Naive thymus-derived CD4-positive, alpha-beta T cell (primary cell): ENCODE measurements at regions of chr22 and their contacts with region 1.

Region 1: GRCh38 chr22:31661851-31662656 is at the start of gene PISD:
- DNase-seq: peak; percentile 93 to 98 (median 97)
- ATAC-seq: peak; percentile 99
- H3K4me3 ChIP-seq: peak within 1 kb of the TSS; percentile 93
- H3K4me3 Mint-ChIP-seq: peak within 1 kb of the TSS; percentile 90 to 100 (median 98)
- H3K27ac ChIP-seq: peak within 1 kb of the TSS; percentile 78
- H3K27ac Mint-ChIP-seq: peak within 1 kb of the TSS; percentile 90 to 100 (median 95)
- H3K4me1 ChIP-seq: peaks cover 10 to 18% of the 10 kb centered on the region in 2 donors
- H3K4me1 Mint-ChIP-seq: peaks cover 22 to 47% (median 39%) of the 10 kb centered on the region in 7 donors
- H3K27me3 ChIP-seq: no peaks in the 10 kb centered on the region
- H3K27me3 Mint-ChIP-seq: no peaks in the 10 kb centered on the region
- total RNA-seq, gene PISD: 29.7 to 47.8 (median 35.5) TPM

Region 2: DNA sequence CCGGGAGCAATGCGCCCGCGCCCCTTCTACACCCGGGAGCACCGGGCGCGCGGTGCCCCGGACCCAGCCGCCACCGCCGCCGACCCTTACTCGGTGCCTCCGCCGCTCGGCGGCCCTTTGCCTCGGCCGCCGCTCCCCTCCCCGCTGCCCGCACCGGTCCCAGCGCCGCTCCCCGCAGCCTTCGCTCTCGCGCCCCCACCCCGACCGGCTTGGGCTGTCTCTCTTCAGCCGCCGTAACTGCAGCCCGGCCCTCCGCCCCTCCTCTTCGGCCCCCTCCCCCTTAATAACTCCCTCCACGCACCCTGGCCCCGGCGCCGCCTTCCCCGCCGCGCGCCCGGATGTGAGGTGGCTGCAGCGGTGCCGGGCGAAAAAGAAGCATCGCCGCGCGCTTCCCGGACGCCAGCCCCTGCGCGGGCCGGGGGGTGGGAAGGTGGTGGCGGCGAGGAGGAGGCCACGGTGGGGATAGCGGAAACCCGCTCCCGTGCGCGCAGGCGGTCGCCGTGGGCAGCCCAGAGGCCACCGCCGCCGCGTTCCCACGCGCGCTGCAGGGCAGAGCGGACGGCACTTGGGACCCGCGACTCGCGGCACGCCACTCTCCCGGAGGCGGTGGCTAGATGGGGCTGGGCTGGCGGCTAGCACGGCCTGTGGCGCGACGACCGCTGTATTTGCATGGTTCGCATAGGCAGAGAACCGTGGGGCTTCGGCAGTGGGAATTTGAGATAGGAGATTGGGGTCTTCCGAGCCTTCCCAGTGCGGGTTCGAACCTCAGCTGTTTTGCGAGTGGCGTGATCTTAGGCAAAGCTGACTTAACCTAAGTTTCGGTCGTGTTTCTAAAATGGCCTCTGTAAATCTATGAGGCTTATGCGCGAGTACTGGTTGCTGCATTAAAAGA is 172.2 kb before region 1 on chr22 and contains the start of gene EIF4ENIF1:
- CTCF ChIA-PET with region 1: no interaction called
- POLR2A ChIA-PET with region 1: interaction called, 3 read pairs
- intact Hi-C with region 1: loop called in 1 of 2 experiments (anchors 2 kb)
- DNase-seq: peak; percentile 81 to 91 (median 87)
- ATAC-seq: peak; percentile 89
- H3K4me3 ChIP-seq: peak within 1 kb of the TSS; percentile 66
- H3K4me3 Mint-ChIP-seq: peak within 1 kb of the TSS; percentile 87 to 98 (median 94)
- H3K27ac ChIP-seq: peak within 1 kb of the TSS; percentile 92
- H3K27ac Mint-ChIP-seq: peak within 1 kb of the TSS; percentile 93 to 99 (median 96)
- H3K4me1 ChIP-seq: peaks cover 19 to 25% of the 10 kb centered on the region in 2 donors
- H3K4me1 Mint-ChIP-seq: peaks cover 7 to 54% (median 47%) of the 10 kb centered on the region in 7 donors
- H3K27me3 ChIP-seq: no peaks in the 10 kb centered on the region
- H3K27me3 Mint-ChIP-seq: no peaks in the 10 kb centered on the region
- total RNA-seq, gene EIF4ENIF1: 26.3 to 46.5 (median 36.8) TPM

Region 3: GRCh38 chr22:31526270-31526669 is 135.8 kb before region 1 on chr22:
- CTCF ChIA-PET with region 1: no interaction called
- POLR2A ChIA-PET with region 1: no interaction called
- intact Hi-C with region 1: no loop called
- DNase-seq: peak in 2 of 9 donors; percentile 17 to 46
- ATAC-seq: peak; percentile 75
- H3K4me3 ChIP-seq: no peak overlapping the region
- H3K4me3 Mint-ChIP-seq: peak overlapping the region in 1 of 10 donors; percentile 27
- H3K27ac ChIP-seq: no peak overlapping the region
- H3K27ac Mint-ChIP-seq: peak overlapping the region in 7 of 9 donors; percentile 4 to 77 (median 55)
- H3K4me1 ChIP-seq: peaks cover 0 to 12% of the 10 kb centered on the region in 2 donors
- H3K4me1 Mint-ChIP-seq: peaks cover 21 to 52% (median 41%) of the 10 kb centered on the region in 7 donors
- H3K27me3 ChIP-seq: no peaks in the 10 kb centered on the region
- H3K27me3 Mint-ChIP-seq: no peaks in the 10 kb centered on the region

Region 4: GRCh38 chr22:31630331-31631329 is 31.4 kb before region 1 on chr22:
- CTCF ChIA-PET with region 1: interaction called, 5 read pairs
- POLR2A ChIA-PET with region 1: interaction called, 12 read pairs
- intact Hi-C with region 1: loop called (anchors 1 kb)
- DNase-seq: peak; percentile 71 to 90 (median 89)
- ATAC-seq: peak; percentile 92
- H3K4me3 ChIP-seq: peak overlapping the region; percentile 74
- H3K4me3 Mint-ChIP-seq: peak overlapping the region; percentile 80 to 92 (median 88)
- H3K27ac ChIP-seq: peak overlapping the region; percentile 95
- H3K27ac Mint-ChIP-seq: peak overlapping the region; percentile 89 to 96 (median 93)
- H3K4me1 ChIP-seq: peaks cover 16 to 19% of the 10 kb centered on the region in 2 donors
- H3K4me1 Mint-ChIP-seq: peaks cover 18 to 58% (median 38%) of the 10 kb centered on the region in 7 donors
- H3K27me3 ChIP-seq: no peaks in the 10 kb centered on the region
- H3K27me3 Mint-ChIP-seq: no peaks in the 10 kb centered on the region

Region 5: GRCh38 chr22:31692186-31692886 is 30.3 kb after region 1 on chr22:
- CTCF ChIA-PET with region 1: no interaction called
- POLR2A ChIA-PET with region 1: no interaction called
- intact Hi-C with region 1: loop called in 1 of 2 experiments (anchors 1 kb)
- DNase-seq: no peak
- ATAC-seq: peak; percentile 56
- H3K4me3 ChIP-seq: no peak overlapping the region
- H3K4me3 Mint-ChIP-seq: peak overlapping the region in 1 of 10 donors; percentile 44
- H3K27ac ChIP-seq: no peak overlapping the region
- H3K27ac Mint-ChIP-seq: peak overlapping the region in 6 of 9 donors; percentile 5 to 86 (median 74)
- H3K4me1 ChIP-seq: peaks cover 0 to 4% of the 10 kb centered on the region in 2 donors
- H3K4me1 Mint-ChIP-seq: peaks cover 0 to 31% (median 0%) of the 10 kb centered on the region in 7 donors
- H3K27me3 ChIP-seq: no peaks in the 10 kb centered on the region
- H3K27me3 Mint-ChIP-seq: no peaks in the 10 kb centered on the region

Region 6: GRCh38 chr22:31790240-31790639 is 128.2 kb after region 1 on chr22:
- CTCF ChIA-PET with region 1: no interaction called
- POLR2A ChIA-PET with region 1: no interaction called
- intact Hi-C with region 1: no loop called
- DNase-seq: no peak
- ATAC-seq: peak; percentile 41
- H3K4me3 ChIP-seq: no peak overlapping the region
- H3K4me3 Mint-ChIP-seq: no peak overlapping the region
- H3K27ac ChIP-seq: no peak overlapping the region
- H3K27ac Mint-ChIP-seq: no peak overlapping the region
- H3K4me1 ChIP-seq: no peaks in the 10 kb centered on the region
- H3K4me1 Mint-ChIP-seq: peaks cover 0 to 5% (median 0%) of the 10 kb centered on the region in 7 donors
- H3K27me3 ChIP-seq: no peaks in the 10 kb centered on the region
- H3K27me3 Mint-ChIP-seq: no peaks in the 10 kb centered on the region

Region 7: DNA sequence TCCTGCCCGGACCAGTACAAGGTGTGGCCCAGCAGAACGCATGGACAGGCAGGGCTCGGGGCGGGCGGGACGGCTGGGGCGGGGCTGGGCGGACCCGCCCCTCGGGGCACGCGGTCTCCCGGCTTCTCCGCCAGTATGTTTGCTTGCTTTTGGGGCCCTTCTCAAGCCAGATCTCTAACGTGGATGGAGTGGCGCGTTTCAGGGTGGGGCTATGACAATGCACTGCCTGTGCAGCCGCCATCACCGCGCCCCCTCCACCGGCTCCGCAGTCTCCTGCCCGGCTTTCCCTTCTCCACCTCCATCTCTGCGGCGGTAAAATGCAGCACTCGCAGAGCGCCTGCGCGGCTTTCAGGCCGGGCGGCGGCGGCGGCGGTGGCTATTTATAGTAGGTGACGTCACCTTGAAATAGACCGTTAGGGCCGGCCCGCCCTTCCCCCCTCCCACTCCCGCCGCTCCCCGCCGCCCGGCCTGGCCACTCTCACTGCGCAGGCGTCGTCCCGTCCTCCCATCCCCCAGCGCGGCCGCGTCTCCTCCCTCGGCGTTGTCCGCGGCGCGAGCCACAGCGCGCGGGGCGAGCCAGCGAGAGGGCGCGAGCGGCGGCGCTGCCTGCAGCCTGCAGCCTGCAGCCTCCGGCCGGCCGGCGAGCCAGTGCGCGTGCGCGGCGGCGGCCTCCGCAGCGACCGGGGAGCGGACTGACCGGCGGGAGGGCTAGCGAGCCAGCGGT is 282.1 kb after region 1 on chr22 and contains the start of gene YWHAH:
- CTCF ChIA-PET with region 1: interaction called, 20 read pairs
- POLR2A ChIA-PET with region 1: interaction called, 14 read pairs
- intact Hi-C with region 1: loop called (anchors 1 kb)
- DNase-seq: peak; percentile 69 to 96 (median 79)
- ATAC-seq: peak; percentile 82
- H3K4me3 ChIP-seq: peak within 1 kb of the TSS; percentile 87
- H3K4me3 Mint-ChIP-seq: peak within 1 kb of the TSS in 6 of 10 donors; percentile 89 to 94 (median 92)
- H3K27ac ChIP-seq: peak within 1 kb of the TSS; percentile 76
- H3K27ac Mint-ChIP-seq: peak within 1 kb of the TSS in 8 of 9 donors; percentile 74 to 95 (median 85)
- H3K4me1 ChIP-seq: peaks cover 18 to 21% of the 10 kb centered on the region in 2 donors
- H3K4me1 Mint-ChIP-seq: peaks cover 7 to 30% (median 14%) of the 10 kb centered on the region in 7 donors
- H3K27me3 ChIP-seq: no peaks in the 10 kb centered on the region
- H3K27me3 Mint-ChIP-seq: no peaks in the 10 kb centered on the region
- total RNA-seq, gene YWHAH: 11.7 to 130 (median 17.1) TPM

Region 8: GRCh38 chr22:31962392-31963125 is 300.5 kb after region 1 on chr22:
- CTCF ChIA-PET with region 1: no interaction called
- POLR2A ChIA-PET with region 1: no interaction called
- intact Hi-C with region 1: no loop called
- DNase-seq: no peak
- ATAC-seq: no peak
- H3K4me3 ChIP-seq: no peak overlapping the region
- H3K4me3 Mint-ChIP-seq: no peak overlapping the region
- H3K27ac ChIP-seq: no peak overlapping the region
- H3K27ac Mint-ChIP-seq: no peak overlapping the region
- H3K4me1 ChIP-seq: peaks cover 0 to 5% of the 10 kb centered on the region in 2 donors
- H3K4me1 Mint-ChIP-seq: peaks cover 0 to 12% (median 8%) of the 10 kb centered on the region in 7 donors
- H3K27me3 ChIP-seq: no peaks in the 10 kb centered on the region
- H3K27me3 Mint-ChIP-seq: peaks cover 0 to 7% (median 3%) of the 10 kb centered on the region in 5 donors

Region 9: GRCh38 chr22:32202539-32203180 is 540.6 kb after region 1 on chr22:
- CTCF ChIA-PET with region 1: no interaction called
- POLR2A ChIA-PET with region 1: no interaction called
- intact Hi-C with region 1: loop called in 1 of 2 experiments (anchors 10 kb)
- DNase-seq: peak in 5 of 9 donors; percentile 7 to 24 (median 20)
- ATAC-seq: peak; percentile 43
- H3K4me3 ChIP-seq: peak overlapping the region; percentile 57
- H3K4me3 Mint-ChIP-seq: peak overlapping the region; percentile 19 to 91 (median 84)
- H3K27ac ChIP-seq: no peak overlapping the region
- H3K27ac Mint-ChIP-seq: peak overlapping the region in 3 of 9 donors; percentile 14 to 34 (median 17)
- H3K4me1 ChIP-seq: peaks cover 12 to 30% of the 10 kb centered on the region in 2 donors
- H3K4me1 Mint-ChIP-seq: peaks cover 20 to 74% (median 49%) of the 10 kb centered on the region in 7 donors
- H3K27me3 ChIP-seq: no peaks in the 10 kb centered on the region
- H3K27me3 Mint-ChIP-seq: peaks cover 0 to 21% (median 6%) of the 10 kb centered on the region in 5 donors

Region 10: GRCh38 chr22:32474635-32475467 is 812.8 kb after region 1 on chr22 and contains the start of gene FBXO7:
- CTCF ChIA-PET with region 1: no interaction called
- POLR2A ChIA-PET with region 1: no interaction called
- intact Hi-C with region 1: loop called (anchors 5 to 10 kb)
- DNase-seq: peak; percentile 80 to 89 (median 85)
- ATAC-seq: peak; percentile 91
- H3K4me3 ChIP-seq: peak within 1 kb of the TSS; percentile 77
- H3K4me3 Mint-ChIP-seq: peak within 1 kb of the TSS in 9 of 10 donors; percentile 88 to 98 (median 96)
- H3K27ac ChIP-seq: peak within 1 kb of the TSS; percentile 97
- H3K27ac Mint-ChIP-seq: peak within 1 kb of the TSS; percentile 88 to 97 (median 93)
- H3K4me1 ChIP-seq: peaks cover 24 to 27% of the 10 kb centered on the region in 2 donors
- H3K4me1 Mint-ChIP-seq: peaks cover 11 to 34% (median 22%) of the 10 kb centered on the region in 7 donors
- H3K27me3 ChIP-seq: no peaks in the 10 kb centered on the region
- H3K27me3 Mint-ChIP-seq: peaks cover 0 to 4% (median 0%) of the 10 kb centered on the region in 5 donors
- total RNA-seq, gene FBXO7: 86.4 to 120 (median 98.2) TPM